ENCODE measurements at regions of chr1 and their contacts with region 1.

Region 1: GRCh38 chr1:109790735-109791494 is 27.2 kb upstream of the EPS8L3 start:
- DNase-seq: peak; percentile 59 to 85 (median 72)
- ATAC-seq: peak; percentile 95 to 99 (median 97)
- H3K4me3 ChIP-seq: no peak overlapping the region
- H3K4me3 Mint-ChIP-seq: peak overlapping the region in 1 of 3 donors; percentile 59
- H3K27ac ChIP-seq: peak overlapping the region; percentile 84
- H3K27ac Mint-ChIP-seq: peak overlapping the region; percentile 90 to 94
- H3K4me1 ChIP-seq: peaks cover 25 to 81% of the 10 kb centered on the region in 2 experiments
- H3K4me1 Mint-ChIP-seq: peaks cover 59 to 88% (median 74%) of the 10 kb centered on the region in 3 donors
- H3K27me3 ChIP-seq: no peaks in the 10 kb centered on the region
- H3K27me3 Mint-ChIP-seq: no peaks in the 10 kb centered on the region

Region 2: GRCh38 chr1:109802901-109803561 is 12.1 kb after region 1 on chr1:
- CTCF ChIA-PET with region 1: interaction called, 13 to 15 read pairs
- POLR2A ChIA-PET with region 1: interaction called in 1 of 2 experiments, 13 read pairs
- DNase-seq: peak in 1 of 35 experiments; percentile 9
- ATAC-seq: no peak
- H3K4me3 ChIP-seq: peak overlapping the region; percentile 10 to 35
- H3K4me3 Mint-ChIP-seq: peak overlapping the region in 2 of 3 donors; percentile 65
- H3K27ac ChIP-seq: peak overlapping the region; percentile 75
- H3K27ac Mint-ChIP-seq: peak overlapping the region; percentile 95 to 97
- H3K4me1 ChIP-seq: peaks cover 30 to 75% of the 10 kb centered on the region in 2 experiments
- H3K4me1 Mint-ChIP-seq: peaks cover 77 to 89% (median 86%) of the 10 kb centered on the region in 3 donors
- H3K27me3 ChIP-seq: no peaks in the 10 kb centered on the region
- H3K27me3 Mint-ChIP-seq: no peaks in the 10 kb centered on the region

Measured in T-cell (primary cell).